A673 (cell line): ENCODE measurements at regions of chr4 and their contacts with region 1.

Region 1: GRCh38 chr4:79588689-79589088 is 180.7 kb upstream of the GK2 start:
- DNase-seq: no peak
- H3K4me3 ChIP-seq: no peak overlapping the region
- H3K27ac ChIP-seq: no peak overlapping the region
- H3K4me1 ChIP-seq: no peaks in the 10 kb centered on the region
- H3K27me3 ChIP-seq: no peaks in the 10 kb centered on the region
- CTCF ChIP-seq: no peak

Region 2: DNA sequence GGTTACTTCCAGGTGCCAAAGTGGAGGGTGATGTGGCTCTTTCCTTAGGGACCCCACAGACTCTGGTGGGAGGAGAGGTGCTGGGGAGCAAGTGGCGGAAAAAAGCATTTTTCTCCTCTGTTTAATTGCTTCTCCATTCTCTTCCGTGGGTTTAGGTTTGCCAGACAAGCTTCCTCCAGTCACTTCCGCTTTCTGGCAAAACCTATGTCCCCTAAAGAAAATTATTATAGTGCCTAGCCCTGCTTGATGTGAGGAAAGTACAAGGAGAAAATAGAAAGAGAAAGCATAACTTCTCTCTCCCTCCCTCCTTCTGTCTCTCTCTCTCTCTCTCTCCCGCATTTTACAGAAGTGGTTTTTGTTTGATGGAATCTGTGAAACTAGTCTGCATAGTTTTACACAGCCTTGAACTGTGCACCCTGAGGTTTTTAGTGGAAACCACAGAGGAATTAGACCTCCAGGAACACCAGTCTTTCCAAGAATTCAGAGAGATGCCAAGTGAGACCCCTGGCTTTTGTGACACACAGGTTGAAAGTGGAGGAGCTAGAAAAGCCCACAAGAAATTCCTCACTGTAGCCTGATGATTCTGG is 1268.2 kb before region 1 on chr4:
- CTCF ChIA-PET with region 1: no interaction called
- POLR2A ChIA-PET with region 1: interaction called, 18 read pairs
- intact Hi-C with region 1: no loop called
- DNase-seq: no peak
- H3K4me3 ChIP-seq: no peak overlapping the region
- H3K27ac ChIP-seq: no peak overlapping the region
- H3K4me1 ChIP-seq: no peaks in the 10 kb centered on the region
- H3K27me3 ChIP-seq: no peaks in the 10 kb centered on the region
- CTCF ChIP-seq: no peak

Region 3: DNA sequence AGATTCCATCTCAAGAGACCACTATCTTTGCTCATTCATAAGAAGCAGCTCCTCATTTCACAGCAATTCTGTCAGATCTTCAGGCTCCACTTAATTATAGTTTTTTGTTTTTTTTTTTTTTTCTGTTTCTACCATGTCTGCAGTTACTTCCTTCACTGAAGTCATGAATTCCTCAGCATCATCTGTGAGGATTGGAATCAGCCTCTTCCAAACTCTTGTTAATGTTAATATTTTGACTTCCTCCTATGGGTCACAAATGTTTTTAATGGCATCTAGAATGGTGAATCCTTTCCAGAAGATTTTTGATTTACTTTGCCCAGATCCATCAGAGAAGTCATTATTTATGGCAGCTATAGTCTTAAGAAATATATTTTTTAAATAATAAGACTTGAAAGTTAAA is 759.4 kb before region 1 on chr4:
- CTCF ChIA-PET with region 1: no interaction called
- POLR2A ChIA-PET with region 1: no interaction called
- intact Hi-C with region 1: no loop called
- DNase-seq: no peak
- H3K4me3 ChIP-seq: no peak overlapping the region
- H3K27ac ChIP-seq: no peak overlapping the region
- H3K4me1 ChIP-seq: no peaks in the 10 kb centered on the region
- H3K27me3 ChIP-seq: no peaks in the 10 kb centered on the region
- CTCF ChIP-seq: no peak

Region 4: GRCh38 chr4:79788884-79789283 is 200.2 kb after region 1 on chr4:
- CTCF ChIA-PET with region 1: no interaction called
- POLR2A ChIA-PET with region 1: no interaction called
- intact Hi-C with region 1: no loop called
- DNase-seq: no peak
- H3K4me3 ChIP-seq: no peak overlapping the region
- H3K27ac ChIP-seq: no peak overlapping the region
- H3K4me1 ChIP-seq: no peaks in the 10 kb centered on the region
- H3K27me3 ChIP-seq: no peaks in the 10 kb centered on the region
- CTCF ChIP-seq: no peak